ENCODE measurements at regions of chr2 and their contacts with region 1.

Region 1: DNA sequence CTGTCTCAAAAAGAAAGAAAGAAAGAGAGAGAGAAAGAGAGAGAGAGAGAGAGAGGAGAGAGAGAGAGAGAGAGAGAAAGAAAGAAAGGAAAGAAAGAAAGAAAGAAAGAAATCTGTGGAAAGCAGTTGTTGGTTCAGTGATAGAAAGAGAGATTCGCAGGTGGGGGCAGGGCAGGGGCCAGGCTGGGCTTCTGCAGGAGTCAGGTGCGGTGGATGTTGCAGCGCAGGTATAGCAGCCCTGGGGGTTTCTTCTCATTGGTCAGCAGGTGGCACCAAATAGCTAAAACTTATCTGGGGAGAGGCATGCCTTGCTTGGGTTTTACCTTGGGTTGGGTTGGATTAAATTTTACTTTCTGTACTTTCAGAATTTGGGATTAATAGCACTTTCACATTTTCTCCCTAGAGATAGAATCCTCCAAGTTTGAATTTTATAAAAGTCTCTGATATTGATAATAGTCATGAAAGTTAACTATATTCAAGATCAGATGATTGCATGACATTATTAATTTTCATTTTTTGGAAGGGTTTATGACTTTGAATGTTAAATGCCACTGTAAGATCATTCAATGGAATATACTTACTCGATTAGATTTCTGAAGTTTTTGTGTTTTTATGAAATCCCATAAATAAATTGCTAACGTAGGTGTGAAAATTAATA is 66.6 kb downstream of the SPTBN1 start:
- DNase-seq: peak; percentile 76
- ATAC-seq: peak; percentile 86
- H3K4me3 Mint-ChIP-seq: no peak overlapping the region
- H3K27ac Mint-ChIP-seq: no peak overlapping the region
- H3K4me1 Mint-ChIP-seq: peaks cover 15% of the 10 kb centered on the region
- H3K27me3 Mint-ChIP-seq: peaks cover 2% of the 10 kb centered on the region

Region 2: GRCh38 chr2:54558188-54559005 is 35.6 kb after region 1 on chr2:
- CTCF ChIA-PET with region 1: interaction called, 19 read pairs
- POLR2A ChIA-PET with region 1: no interaction called
- intact Hi-C with region 1: loop called (anchors 1 to 2 kb)
- DNase-seq: peak; percentile 86
- ATAC-seq: peak; percentile 54
- H3K4me3 Mint-ChIP-seq: peak overlapping the region; percentile 91
- H3K27ac Mint-ChIP-seq: peak overlapping the region; percentile 94
- H3K4me1 Mint-ChIP-seq: peaks cover 43% of the 10 kb centered on the region
- H3K27me3 Mint-ChIP-seq: no peaks in the 10 kb centered on the region

Region 3: DNA sequence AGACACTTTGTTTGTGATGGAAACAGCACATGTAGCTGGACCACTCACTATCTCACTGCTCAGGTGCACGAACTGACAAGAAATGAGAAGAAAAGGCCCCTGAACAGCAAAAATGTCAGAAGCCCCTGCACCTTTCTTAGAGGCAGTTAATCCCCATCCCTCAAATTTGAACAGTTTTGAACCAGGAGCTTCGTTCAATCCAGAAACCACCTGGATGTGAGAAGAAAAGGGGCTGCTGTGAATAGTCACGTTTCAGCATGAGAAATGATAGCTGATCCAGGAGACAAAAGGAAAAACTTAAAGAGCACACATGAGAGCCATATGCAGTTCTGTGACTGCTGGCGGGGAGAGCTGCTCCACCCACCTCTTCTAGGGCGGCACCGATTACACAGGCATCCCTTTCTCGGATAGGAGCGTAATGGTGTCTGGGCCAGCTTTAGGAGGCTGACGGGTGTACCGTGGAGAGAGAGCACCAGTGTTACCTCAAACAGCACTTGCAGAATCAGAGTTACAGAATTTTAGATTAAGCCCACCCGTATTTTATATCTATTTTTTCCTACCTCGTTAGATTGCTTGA is 83.7 kb after region 1 on chr2:
- CTCF ChIA-PET with region 1: interaction called, 5 read pairs
- POLR2A ChIA-PET with region 1: no interaction called
- intact Hi-C with region 1: loop called in 1 of 2 experiments (anchors 5 kb)
- DNase-seq: peak; percentile 77
- ATAC-seq: peak; percentile 81
- H3K4me3 Mint-ChIP-seq: peak overlapping the region; percentile 50
- H3K27ac Mint-ChIP-seq: peak overlapping the region; percentile 85
- H3K4me1 Mint-ChIP-seq: peaks cover 80% of the 10 kb centered on the region
- H3K27me3 Mint-ChIP-seq: no peaks in the 10 kb centered on the region

Region 4: GRCh38 chr2:54665436-54665856 is 142.7 kb after region 1 on chr2:
- CTCF ChIA-PET with region 1: interaction called, 36 read pairs
- POLR2A ChIA-PET with region 1: no interaction called
- intact Hi-C with region 1: no loop called
- DNase-seq: peak; percentile 75
- ATAC-seq: peak; percentile 92
- H3K4me3 Mint-ChIP-seq: no peak overlapping the region
- H3K27ac Mint-ChIP-seq: peak overlapping the region; percentile 80
- H3K4me1 Mint-ChIP-seq: peaks cover 3% of the 10 kb centered on the region
- H3K27me3 Mint-ChIP-seq: no peaks in the 10 kb centered on the region

Region 5: DNA sequence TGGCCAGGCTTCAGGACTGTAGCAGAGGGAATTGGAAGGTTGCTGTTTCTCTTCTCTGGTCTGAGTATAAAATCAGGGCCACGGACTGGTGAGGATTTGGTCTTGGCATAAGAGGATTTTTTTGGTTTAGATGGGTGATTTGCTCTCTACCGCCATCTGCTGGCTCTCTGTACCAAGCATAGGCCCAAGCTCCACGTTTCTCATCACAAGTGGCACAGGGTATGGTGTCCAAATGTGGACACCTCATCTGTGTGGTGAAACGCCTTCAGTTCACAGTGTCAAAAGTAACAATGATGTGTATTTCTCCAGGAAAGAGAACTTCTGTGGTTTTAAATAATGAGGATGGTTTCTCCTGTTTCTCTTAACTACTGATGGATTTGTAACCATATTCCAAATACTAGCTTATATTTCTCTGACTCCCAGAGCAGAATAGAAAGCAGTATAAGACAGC is 315.9 kb after region 1 on chr2:
- CTCF ChIA-PET with region 1: interaction called, 13 read pairs
- POLR2A ChIA-PET with region 1: no interaction called
- intact Hi-C with region 1: loop called (anchors 1 kb)
- DNase-seq: peak; percentile 79
- ATAC-seq: peak; percentile 97
- H3K4me3 Mint-ChIP-seq: no peak overlapping the region
- H3K27ac Mint-ChIP-seq: no peak overlapping the region
- H3K4me1 Mint-ChIP-seq: no peaks in the 10 kb centered on the region
- H3K27me3 Mint-ChIP-seq: no peaks in the 10 kb centered on the region

Region 6: DNA sequence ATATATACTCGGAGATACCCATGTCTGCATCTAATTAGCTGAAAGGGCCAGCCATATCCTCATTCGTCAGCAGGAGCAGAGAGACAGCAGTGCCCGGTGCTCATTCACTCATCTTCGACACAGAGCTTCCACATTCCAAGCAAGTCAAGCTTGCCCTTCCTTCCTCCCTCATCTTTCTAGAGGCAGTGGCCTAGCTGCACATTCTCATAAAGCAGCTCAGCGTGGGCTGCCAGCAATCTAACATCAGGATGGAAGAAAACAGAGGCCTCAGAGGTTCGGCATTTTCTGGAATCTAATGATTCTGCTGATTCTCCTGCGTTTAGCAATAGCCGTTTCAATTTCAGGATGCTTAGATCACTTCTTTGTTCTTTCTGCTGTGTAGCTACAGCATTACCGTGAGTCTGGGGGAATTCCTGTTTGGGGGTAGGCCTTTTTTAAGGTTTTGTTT is 640.5 kb after region 1 on chr2:
- CTCF ChIA-PET with region 1: no interaction called
- POLR2A ChIA-PET with region 1: no interaction called
- intact Hi-C with region 1: no loop called
- DNase-seq: no peak
- ATAC-seq: no peak
- H3K4me3 Mint-ChIP-seq: no peak overlapping the region
- H3K27ac Mint-ChIP-seq: no peak overlapping the region
- H3K4me1 Mint-ChIP-seq: no peaks in the 10 kb centered on the region
- H3K27me3 Mint-ChIP-seq: no peaks in the 10 kb centered on the region